ENCODE measurements at regions of chr7 and their contacts with region 1.

Region 1: GRCh38 chr7:1144269-1144771 is 15.7 kb downstream of the ZFAND2A start:
- H3K4me3 Mint-ChIP-seq: no peak overlapping the region
- H3K27ac Mint-ChIP-seq: no peak overlapping the region
- H3K4me1 Mint-ChIP-seq: peaks cover 8% of the 10 kb centered on the region
- H3K27me3 Mint-ChIP-seq: no peaks in the 10 kb centered on the region

Region 2: GRCh38 chr7:844043-844442 is 300.3 kb before region 1 on chr7:
- intact Hi-C with region 1: no loop called
- H3K4me3 Mint-ChIP-seq: no peak overlapping the region
- H3K27ac Mint-ChIP-seq: no peak overlapping the region
- H3K4me1 Mint-ChIP-seq: no peaks in the 10 kb centered on the region
- H3K27me3 Mint-ChIP-seq: no peaks in the 10 kb centered on the region

Region 3: DNA sequence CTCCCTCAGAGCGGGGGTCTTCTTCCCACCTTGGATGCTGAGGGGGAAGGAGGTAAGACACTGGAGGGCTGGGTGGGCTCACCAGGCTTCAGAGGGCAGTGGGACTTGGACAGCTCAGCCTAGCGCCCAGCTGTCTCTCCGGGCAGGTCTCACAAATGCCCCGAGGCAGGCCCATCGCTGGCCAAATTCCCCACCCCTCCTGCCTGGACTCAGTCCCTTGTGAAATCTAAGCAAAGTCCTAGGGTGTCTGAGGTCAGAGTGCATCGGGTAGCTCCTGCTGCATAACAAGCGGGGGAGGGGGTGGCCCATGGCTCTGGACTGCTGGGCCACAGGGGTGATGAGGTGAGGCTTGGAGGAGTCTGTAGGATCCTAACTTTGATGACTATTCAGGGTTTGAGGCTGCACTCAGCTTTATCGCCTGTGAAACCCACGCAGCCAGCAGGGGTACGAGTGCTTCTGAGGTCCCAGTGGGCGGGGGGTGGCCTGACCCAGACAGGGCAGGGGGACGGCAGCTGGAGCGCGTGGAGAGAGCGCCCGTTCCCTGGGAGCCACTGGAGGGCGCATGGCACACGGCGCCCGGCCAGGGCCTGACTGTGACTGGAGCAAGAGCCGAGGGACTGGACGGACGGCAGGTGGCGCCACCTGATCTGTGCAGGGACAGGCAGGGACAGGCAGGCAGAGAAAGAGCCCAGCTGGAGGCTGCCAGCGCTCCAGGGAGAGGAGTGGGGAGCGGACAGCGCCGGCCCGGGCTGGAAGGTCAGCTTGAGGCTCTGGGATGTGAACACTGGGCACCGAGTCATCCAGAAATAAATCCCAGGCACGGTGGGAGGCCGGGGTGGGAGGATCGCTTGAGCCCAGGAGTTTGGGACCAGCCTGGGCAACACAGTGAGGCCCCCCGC is 151.4 kb before region 1 on chr7:
- intact Hi-C with region 1: loop called (anchors 2 kb)
- H3K4me3 Mint-ChIP-seq: no peak overlapping the region
- H3K27ac Mint-ChIP-seq: no peak overlapping the region
- H3K4me1 Mint-ChIP-seq: peaks cover 17% of the 10 kb centered on the region
- H3K27me3 Mint-ChIP-seq: peaks cover 42% of the 10 kb centered on the region

Region 4: GRCh38 chr7:1086588-1087464 is 57.5 kb before region 1 on chr7:
- intact Hi-C with region 1: loop called (anchors 2 kb)
- H3K4me3 Mint-ChIP-seq: peak overlapping the region; percentile 66
- H3K27ac Mint-ChIP-seq: no peak overlapping the region
- H3K4me1 Mint-ChIP-seq: peaks cover 29% of the 10 kb centered on the region
- H3K27me3 Mint-ChIP-seq: peaks cover 5% of the 10 kb centered on the region

Measured in dendritic cell treated with granulocyte-macrophage colony-stimulating factor and Interleukin-4, amounts not matched to agents 40 ng/mL and 50 ng/mL, for 4 days (primary cell).